ENCODE measurements at regions of chrX and their contacts with region 1.

Region 1: DNA sequence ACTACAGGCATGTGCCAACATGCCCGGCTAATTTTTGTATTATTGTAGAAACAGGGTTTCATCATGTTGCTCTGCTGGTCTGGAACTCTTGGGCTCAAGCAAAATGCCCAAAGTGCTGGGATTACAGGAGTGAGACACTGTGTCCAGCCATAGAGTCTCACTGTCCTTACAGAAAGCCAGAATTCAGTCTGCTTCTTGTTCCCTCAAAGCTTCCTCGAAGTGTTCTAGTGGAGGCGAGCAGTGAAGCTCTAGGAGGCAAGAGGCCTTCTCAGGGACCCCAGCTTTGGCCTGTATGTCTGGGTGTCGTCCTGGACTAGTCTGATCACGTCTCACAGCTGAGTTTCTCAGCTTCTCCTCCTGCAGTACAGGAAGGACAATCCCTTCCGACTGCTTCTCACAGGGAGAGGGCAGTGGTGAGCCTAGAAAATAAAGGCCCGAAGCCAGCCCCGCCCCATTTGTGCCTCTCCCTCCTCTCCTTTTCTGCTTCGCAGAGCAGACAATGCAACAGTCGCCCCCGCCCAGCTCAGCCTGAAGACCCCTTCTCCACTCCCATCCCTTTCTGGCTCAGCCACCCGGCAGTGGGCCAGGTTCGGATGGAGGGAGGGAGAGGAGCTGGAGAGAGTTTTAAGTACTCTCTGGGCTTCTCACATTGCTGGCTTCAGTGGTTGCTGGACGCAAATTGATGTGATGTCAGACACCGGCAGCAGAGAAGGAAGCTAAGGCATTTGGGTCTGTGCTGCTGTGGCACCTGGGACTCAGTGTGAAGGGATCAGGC is 11.1 kb upstream of the FAM3A start:
- DNase-seq: peak; percentile 84
- H3K4me3 Mint-ChIP-seq: peak overlapping the region; percentile 29
- H3K27ac Mint-ChIP-seq: peak overlapping the region; percentile 88
- H3K4me1 Mint-ChIP-seq: peaks cover 10% of the 10 kb centered on the region
- H3K27me3 Mint-ChIP-seq: no peaks in the 10 kb centered on the region
- CTCF ChIP-seq: peak; percentile 43

Region 2: DNA sequence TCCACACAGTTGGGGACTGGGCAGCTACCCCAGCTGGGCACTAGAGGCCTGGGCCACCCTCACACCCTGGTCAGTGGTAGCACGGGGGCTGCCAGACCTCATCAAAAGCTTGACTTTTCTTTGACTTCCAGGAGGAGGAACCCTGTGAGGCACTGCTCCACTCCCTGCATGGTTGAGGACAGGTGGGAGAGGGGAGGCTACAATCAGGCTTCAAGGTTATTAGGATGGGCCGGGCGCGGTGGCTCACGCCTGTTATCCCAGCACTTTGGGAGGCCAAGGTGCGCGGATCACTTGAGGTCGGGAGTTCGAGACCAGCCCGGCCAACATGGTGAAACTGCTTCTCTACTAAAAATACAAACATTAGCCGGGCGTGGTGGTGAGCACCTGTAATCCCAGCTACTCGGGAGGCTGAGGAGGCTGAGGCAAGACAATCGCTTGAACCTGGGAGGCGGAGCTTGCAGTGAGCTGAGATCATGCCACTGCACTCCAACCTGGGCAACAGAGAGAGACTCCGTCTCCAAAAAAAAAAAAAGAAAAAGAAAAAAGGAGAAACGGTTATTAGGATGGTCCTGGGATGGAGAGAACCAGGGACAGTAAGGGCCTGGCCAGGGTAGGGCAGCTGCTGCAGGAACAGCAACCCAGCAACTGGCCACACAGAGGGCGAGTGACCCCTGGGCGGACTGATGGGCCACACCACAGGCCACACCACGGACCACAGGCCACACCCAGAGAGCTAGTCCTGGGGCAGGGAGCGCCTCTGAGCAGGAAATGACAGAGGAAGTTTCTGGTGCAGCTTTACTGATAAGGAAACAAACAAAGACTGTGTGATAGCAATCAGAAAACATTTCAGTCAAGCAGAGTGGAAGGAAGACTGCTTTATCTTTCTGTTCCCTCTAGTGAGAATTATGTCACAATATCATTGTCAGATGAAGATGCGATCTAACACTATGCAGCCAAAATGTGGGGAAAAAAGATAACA is 403.6 kb before region 1 on chrX:
- CTCF ChIA-PET with region 1: no interaction called
- POLR2A ChIA-PET with region 1: no interaction called
- intact Hi-C with region 1: no loop called
- DNase-seq: no peak
- H3K4me3 Mint-ChIP-seq: no peak overlapping the region
- H3K27ac Mint-ChIP-seq: no peak overlapping the region
- H3K4me1 Mint-ChIP-seq: no peaks in the 10 kb centered on the region
- H3K27me3 Mint-ChIP-seq: peaks cover 36% of the 10 kb centered on the region
- CTCF ChIP-seq: no peak

Region 3: DNA sequence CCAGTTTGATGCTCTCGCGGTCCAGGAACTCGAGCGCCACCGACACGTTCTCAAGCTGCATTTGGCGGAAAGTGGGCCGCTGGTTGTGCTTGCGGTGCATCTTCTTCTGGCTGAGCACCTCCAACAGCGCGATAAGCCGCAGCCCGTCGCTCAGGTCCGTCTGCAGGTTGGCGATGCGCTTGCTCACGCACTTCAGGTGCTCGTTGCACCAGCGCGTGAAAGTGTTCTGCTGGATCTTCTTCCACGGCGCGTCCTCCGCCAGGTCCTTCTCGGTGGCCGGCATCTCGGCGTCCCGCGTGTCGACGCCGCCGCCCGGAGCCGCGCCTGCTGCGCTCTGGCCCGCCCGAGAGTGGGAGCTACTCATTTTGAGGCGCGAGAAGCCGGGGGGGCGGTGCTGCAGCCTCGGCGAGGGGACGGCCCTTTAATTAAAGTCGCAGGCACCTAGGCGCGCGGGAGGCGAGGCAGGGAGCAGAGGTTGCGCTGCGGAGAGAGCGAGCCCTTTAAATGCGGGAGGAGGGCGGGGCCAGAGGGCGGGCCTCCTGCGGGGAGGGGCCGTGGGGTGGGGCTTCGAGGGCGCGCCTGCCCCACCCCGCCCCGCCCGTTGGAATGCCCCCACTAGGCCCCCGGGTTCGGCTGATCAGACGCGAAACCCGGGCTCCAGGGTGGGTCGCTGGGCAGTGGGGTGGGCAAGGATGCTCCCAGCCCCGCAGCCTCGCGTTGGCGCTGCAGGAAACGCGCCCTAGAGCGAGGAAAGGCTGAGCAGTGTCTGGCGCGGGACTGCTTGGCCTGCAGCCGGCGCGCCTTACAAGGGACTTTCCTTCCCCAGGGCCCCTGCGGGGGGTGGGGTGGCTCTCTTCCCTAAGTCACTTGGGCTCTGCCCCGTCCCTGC is 156.0 kb before region 1 on chrX:
- CTCF ChIA-PET with region 1: interaction called, 54 read pairs
- POLR2A ChIA-PET with region 1: interaction called, 8 read pairs
- intact Hi-C with region 1: no loop called
- DNase-seq: peak; percentile 93
- H3K4me3 Mint-ChIP-seq: peak overlapping the region; percentile 75
- H3K27ac Mint-ChIP-seq: peak overlapping the region; percentile 54
- H3K4me1 Mint-ChIP-seq: peaks cover 8% of the 10 kb centered on the region
- H3K27me3 Mint-ChIP-seq: no peaks in the 10 kb centered on the region
- CTCF ChIP-seq: no peak

Region 4: GRCh38 chrX:154490414-154491083 is 36.5 kb before region 1 on chrX and contains the start of gene SLC10A3:
- CTCF ChIA-PET with region 1: interaction called, 7 read pairs
- POLR2A ChIA-PET with region 1: interaction called, 16 read pairs
- intact Hi-C with region 1: no loop called
- DNase-seq: peak; percentile 85
- H3K4me3 Mint-ChIP-seq: peak within 1 kb of the TSS; percentile 76
- H3K27ac Mint-ChIP-seq: peak within 1 kb of the TSS; percentile 83
- H3K4me1 Mint-ChIP-seq: no peaks in the 10 kb centered on the region
- H3K27me3 Mint-ChIP-seq: peaks cover 11% of the 10 kb centered on the region
- CTCF ChIP-seq: no peak
- total RNA-seq, gene SLC10A3: 17.9 and 21.2 TPM in 2 replicates

Region 5: GRCh38 chrX:154515878-154516655 is 11.0 kb before region 1 on chrX and contains the start of gene FAM3A:
- CTCF ChIA-PET with region 1: interaction called, 5 read pairs
- POLR2A ChIA-PET with region 1: interaction called, 36 read pairs
- intact Hi-C with region 1: no loop called
- DNase-seq: peak; percentile 81
- H3K4me3 Mint-ChIP-seq: peak within 1 kb of the TSS; percentile 67
- H3K27ac Mint-ChIP-seq: peak within 1 kb of the TSS; percentile 88
- H3K4me1 Mint-ChIP-seq: no peaks in the 10 kb centered on the region
- H3K27me3 Mint-ChIP-seq: peaks cover 12% of the 10 kb centered on the region
- CTCF ChIP-seq: no peak
- total RNA-seq, gene FAM3A: 40.9 and 45.3 TPM in 2 replicates

Region 6: GRCh38 chrX:154541724-154542467 is 14.8 kb after region 1 on chrX:
- CTCF ChIA-PET with region 1: interaction called, 17 read pairs
- POLR2A ChIA-PET with region 1: interaction called, 11 read pairs
- intact Hi-C with region 1: no loop called
- DNase-seq: peak; percentile 98
- H3K4me3 Mint-ChIP-seq: peak overlapping the region; percentile 47
- H3K27ac Mint-ChIP-seq: peak overlapping the region; percentile 54
- H3K4me1 Mint-ChIP-seq: peaks cover 24% of the 10 kb centered on the region
- H3K27me3 Mint-ChIP-seq: no peaks in the 10 kb centered on the region
- CTCF ChIP-seq: no peak